ENCODE measurements at regions of chr3 and their contacts with region 1.

Region 1: DNA sequence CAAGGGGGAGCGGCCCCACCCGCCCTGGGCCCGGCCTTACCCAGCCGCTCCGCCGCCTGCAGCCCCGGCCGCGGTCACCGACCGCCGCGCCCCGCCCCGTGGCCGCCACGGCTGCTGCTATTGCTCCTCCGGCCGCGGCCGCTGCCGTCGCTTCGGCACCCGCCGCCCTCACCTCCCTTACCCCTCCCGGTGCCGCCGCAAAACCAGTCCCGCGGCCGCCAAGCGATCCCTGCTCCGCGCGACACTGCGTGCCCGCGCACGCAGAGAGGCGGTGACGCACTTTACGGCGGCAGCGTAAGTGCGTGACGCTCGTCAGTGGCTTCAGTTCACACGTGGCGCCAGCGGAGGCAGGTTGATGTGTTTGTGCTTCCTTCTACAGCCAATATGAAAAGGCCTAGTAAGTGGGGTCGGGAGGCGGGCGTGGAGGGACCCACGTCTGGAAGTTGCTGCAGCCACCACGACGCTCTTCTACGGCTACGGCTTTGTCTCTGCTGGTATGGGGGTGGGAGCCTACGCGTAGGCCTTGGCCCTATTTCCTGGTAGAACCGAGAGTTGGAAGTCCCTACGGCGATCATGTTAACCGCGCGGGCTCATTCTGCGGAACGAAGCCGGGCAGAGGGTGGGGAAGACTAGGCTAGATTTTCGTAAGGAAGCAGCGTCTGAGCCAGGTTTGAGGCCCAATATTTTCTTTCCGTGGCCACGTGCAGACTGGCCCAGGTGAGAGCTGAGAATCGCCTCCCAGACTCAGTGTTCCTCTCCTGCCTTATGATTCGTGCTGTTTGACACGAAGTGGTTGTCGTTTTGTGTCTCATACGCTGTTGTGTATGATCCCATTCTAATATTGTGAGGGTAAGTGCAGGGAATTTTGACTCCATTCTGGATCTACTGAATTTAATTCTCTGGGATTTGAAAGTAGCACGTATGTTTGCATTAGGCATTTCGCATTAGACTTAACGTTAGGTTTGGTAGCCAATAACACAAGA is at the starts of genes GNL3 and PBRM1:
- DNase-seq: peak; percentile 88 to 96 (median 94)
- H3K4me3 ChIP-seq: peak within 1 kb of the TSS; percentile 65 to 98 (median 89)
- H3K27ac ChIP-seq: peak within 1 kb of the TSS; percentile 72 to 99 (median 95)
- H3K27me3 ChIP-seq: no peaks in the 10 kb centered on the region
- CTCF ChIP-seq: peak in 16 of 56 donors; percentile 6 to 40 (median 14)
- total RNA-seq, gene GNL3: 22.3 to 57.4 (median 40.7) TPM
- total RNA-seq, gene PBRM1: 41.4 to 68.2 (median 53.3) TPM

Region 2: GRCh38 chr3:52406231-52406661 is 279.8 kb before region 1 on chr3:
- intact Hi-C with region 1: loop called in 1 of 2 experiments (anchors 5 kb)
- DNase-seq: peak in 2 of 10 donors; percentile 26 to 31
- H3K4me3 ChIP-seq: no peak overlapping the region
- H3K27ac ChIP-seq: no peak overlapping the region
- H3K27me3 ChIP-seq: no peaks in the 10 kb centered on the region
- CTCF ChIP-seq: no peak

Region 3: GRCh38 chr3:52471371-52472238 is 214.4 kb before region 1 on chr3:
- intact Hi-C with region 1: loop called (anchors 2 to 5 kb)
- DNase-seq: peak in 7 of 10 donors; percentile 54 to 75 (median 72)
- H3K4me3 ChIP-seq: no peak overlapping the region
- H3K27ac ChIP-seq: peak overlapping the region in 50 of 59 donors; percentile 0 to 96 (median 56)
- H3K27me3 ChIP-seq: no peaks in the 10 kb centered on the region
- CTCF ChIP-seq: peak; percentile 46 to 86 (median 72)

Region 4: DNA sequence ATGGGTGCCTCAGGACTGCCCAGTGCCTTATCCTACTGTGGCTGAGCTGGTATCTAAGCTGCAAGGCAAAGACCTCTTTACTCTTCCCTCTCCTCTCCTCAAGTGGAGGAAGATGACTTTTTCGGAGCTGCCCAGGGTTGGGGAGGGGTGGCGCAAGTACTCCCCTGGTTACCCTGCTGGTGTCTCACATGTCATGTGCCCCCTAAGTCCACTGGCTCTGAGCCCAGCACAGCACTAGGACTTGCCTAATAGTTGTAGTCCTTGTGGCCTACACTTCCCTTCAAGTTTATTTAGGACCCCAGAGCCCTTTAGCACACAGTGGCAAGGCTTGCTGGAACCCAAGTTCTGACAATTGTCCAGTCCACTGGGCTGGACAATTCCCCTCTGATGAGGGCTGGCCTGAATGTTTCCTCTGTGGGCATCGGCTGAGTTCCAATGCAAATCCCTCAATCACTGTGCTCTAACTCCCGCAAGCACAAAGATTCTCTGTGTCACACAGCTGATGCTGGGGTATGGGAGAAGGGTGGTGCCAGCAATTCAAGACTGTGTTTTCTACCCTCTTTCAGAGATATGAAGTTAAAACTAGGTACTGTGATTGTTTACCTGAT is 89.2 kb before region 1 on chr3:
- intact Hi-C with region 1: loop called (anchors 5 to 10 kb)
- DNase-seq: peak; percentile 19 to 87 (median 80)
- H3K4me3 ChIP-seq: peak overlapping the region in 17 of 59 donors; percentile 2 to 46 (median 16)
- H3K27ac ChIP-seq: peak overlapping the region; percentile 53 to 97 (median 91)
- H3K27me3 ChIP-seq: no peaks in the 10 kb centered on the region
- CTCF ChIP-seq: peak in 16 of 56 donors; percentile 7 to 39 (median 20)

Region 5: DNA sequence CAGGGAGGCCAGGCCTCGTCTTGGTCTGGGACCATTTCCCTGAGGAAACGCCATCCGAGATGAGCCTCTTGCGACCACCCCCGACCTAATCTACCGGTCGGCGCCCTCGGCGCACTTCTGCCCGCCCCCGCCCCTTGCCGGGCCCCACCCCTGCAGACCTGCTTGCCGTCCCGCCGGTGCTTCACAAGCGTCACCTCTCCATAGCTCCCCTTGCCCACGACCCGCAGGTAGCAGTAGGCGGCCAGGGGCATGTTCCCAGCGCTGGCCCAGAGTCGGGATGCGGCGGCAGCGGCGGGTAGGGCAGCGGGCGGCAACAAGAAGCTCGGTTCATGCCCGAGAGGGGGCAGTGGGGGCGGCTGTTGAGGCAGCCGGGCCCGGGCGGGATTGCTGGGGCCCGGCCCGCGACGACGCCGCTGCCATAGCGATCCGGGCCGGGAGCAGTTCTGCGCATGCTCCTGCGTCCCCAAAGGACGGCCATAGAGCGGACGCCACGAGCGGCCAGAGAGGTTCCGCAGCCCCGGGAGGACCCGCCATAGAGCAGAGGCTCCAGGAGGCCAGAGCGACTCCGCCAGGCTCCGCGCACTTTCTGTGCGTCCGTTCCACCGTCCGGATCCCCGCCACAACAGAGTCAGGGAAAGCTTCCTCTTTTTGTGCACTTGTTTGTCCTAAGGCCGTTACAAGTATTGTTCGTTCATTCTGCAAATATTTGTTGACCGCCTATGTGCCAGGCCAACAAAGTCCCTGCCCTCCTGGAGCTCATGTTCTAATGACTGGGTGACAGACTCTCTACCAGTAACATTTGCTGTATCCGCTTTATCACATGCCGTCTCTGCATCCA is 84.7 kb after region 1 on chr3 and contains the start of gene NEK4:
- intact Hi-C with region 1: loop called in 1 of 2 experiments (anchors 5 kb)
- DNase-seq: peak; percentile 86 to 96 (median 92)
- H3K4me3 ChIP-seq: peak within 1 kb of the TSS; percentile 63 to 98 (median 89)
- H3K27ac ChIP-seq: peak within 1 kb of the TSS; percentile 20 to 93 (median 80)
- H3K27me3 ChIP-seq: no peaks in the 10 kb centered on the region
- CTCF ChIP-seq: peak in 44 of 56 donors; percentile 8 to 68 (median 39)
- total RNA-seq, gene NEK4: 34.0 to 82.9 (median 51.4) TPM

Region 6: GRCh38 chr3:53150247-53151085 is 464.5 kb after region 1 on chr3:
- intact Hi-C with region 1: no loop called
- DNase-seq: no peak
- H3K4me3 ChIP-seq: no peak overlapping the region
- H3K27ac ChIP-seq: no peak overlapping the region
- H3K27me3 ChIP-seq: no peaks in the 10 kb centered on the region
- CTCF ChIP-seq: no peak